Heart right ventricle (tissue), 16 donors: ENCODE measurements at regions of chr7 and their contacts with region 1.

Region 1: GRCh38 chr7:99918959-99919813 is at the start of gene TRIM4:
- DNase-seq: peak; percentile 90 to 91
- ATAC-seq: peak; percentile 99 to 100 (median 99)
- H3K4me3 ChIP-seq: peak within 1 kb of the TSS; percentile 70 to 94 (median 90)
- H3K27ac ChIP-seq: peak within 1 kb of the TSS; percentile 63 to 96 (median 90)
- H3K4me1 ChIP-seq: peaks cover 0 to 38% (median 36%) of the 10 kb centered on the region in 9 donors
- H3K27me3 ChIP-seq: no peaks in the 10 kb centered on the region
- CTCF ChIP-seq: peak in 5 of 9 donors; percentile 17 to 54 (median 49)
- total RNA-seq, gene TRIM4: 5.0 to 9.6 (median 6.6) TPM

Region 2: GRCh38 chr7:99624484-99624883 is 294.7 kb before region 1 on chr7:
- intact Hi-C with region 1: loop called in 2 of 10 experiments (anchors 10 kb)
- DNase-seq: no peak
- ATAC-seq: no peak
- H3K4me3 ChIP-seq: no peak overlapping the region
- H3K27ac ChIP-seq: peak overlapping the region in 1 of 10 donors; percentile 78
- H3K4me1 ChIP-seq: peaks cover 0 to 3% (median 0%) of the 10 kb centered on the region in 9 donors
- H3K27me3 ChIP-seq: no peaks in the 10 kb centered on the region
- CTCF ChIP-seq: no peak

Region 3: GRCh38 chr7:99839287-99840021 is 79.7 kb before region 1 on chr7:
- intact Hi-C with region 1: no loop called
- DNase-seq: no peak
- ATAC-seq: no peak
- H3K4me3 ChIP-seq: no peak overlapping the region
- H3K27ac ChIP-seq: no peak overlapping the region
- H3K4me1 ChIP-seq: peaks cover 0 to under 1% (median 0%) of the 10 kb centered on the region in 9 donors
- H3K27me3 ChIP-seq: no peaks in the 10 kb centered on the region
- CTCF ChIP-seq: no peak

Region 4: DNA sequence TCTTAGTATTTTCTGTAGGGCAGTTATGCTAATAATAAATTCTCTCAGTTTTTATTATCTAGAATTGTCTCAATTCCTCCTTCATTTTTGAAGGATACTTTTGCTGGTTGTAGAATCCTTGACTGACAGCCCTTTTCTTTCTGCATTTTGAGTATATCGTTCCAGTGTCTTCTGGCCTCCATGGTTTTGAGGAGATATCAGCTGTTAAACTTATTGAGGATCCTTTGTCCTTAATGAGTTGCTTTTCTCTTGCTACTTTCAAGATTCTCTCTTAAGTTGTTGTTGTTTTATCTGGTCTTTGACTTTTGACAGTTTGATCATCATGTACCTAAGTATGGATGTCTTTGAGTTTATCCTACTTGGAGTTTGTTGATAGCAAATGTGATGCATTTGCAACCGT is 19.1 kb after region 1 on chr7:
- intact Hi-C with region 1: no loop called
- DNase-seq: no peak
- ATAC-seq: no peak
- H3K4me3 ChIP-seq: no peak overlapping the region
- H3K27ac ChIP-seq: no peak overlapping the region
- H3K4me1 ChIP-seq: no peaks in the 10 kb centered on the region
- H3K27me3 ChIP-seq: peaks cover 0 to 19% (median 7%) of the 10 kb centered on the region in 7 donors
- CTCF ChIP-seq: no peak

Region 5: GRCh38 chr7:99990460-99990852 is 71.3 kb after region 1 on chr7:
- intact Hi-C with region 1: loop called in 8 of 10 experiments (anchors 5 to 10 kb)
- DNase-seq: no peak
- ATAC-seq: no peak
- H3K4me3 ChIP-seq: peak overlapping the region in 6 of 10 donors; percentile 0 to 31 (median 24)
- H3K27ac ChIP-seq: no peak overlapping the region
- H3K4me1 ChIP-seq: peaks cover 0 to 35% (median 20%) of the 10 kb centered on the region in 9 donors
- H3K27me3 ChIP-seq: peaks cover 0 to 7% (median 0%) of the 10 kb centered on the region in 7 donors
- CTCF ChIP-seq: no peak

Region 6: GRCh38 chr7:99997545-99998137 is 78.5 kb after region 1 on chr7:
- intact Hi-C with region 1: loop called in 8 of 10 experiments (anchors 5 to 10 kb)
- DNase-seq: peak; percentile 50 to 71
- ATAC-seq: peak; percentile 67 to 85 (median 82)
- H3K4me3 ChIP-seq: peak overlapping the region; percentile 13 to 68 (median 61)
- H3K27ac ChIP-seq: peak overlapping the region; percentile 54 to 93 (median 85)
- H3K4me1 ChIP-seq: peaks cover 0 to 25% (median 17%) of the 10 kb centered on the region in 9 donors
- H3K27me3 ChIP-seq: no peaks in the 10 kb centered on the region
- CTCF ChIP-seq: peak in 7 of 9 donors; percentile 29 to 60 (median 45)

Region 7: GRCh38 chr7:100008525-100008924 is 89.3 kb after region 1 on chr7:
- intact Hi-C with region 1: no loop called
- DNase-seq: no peak
- ATAC-seq: no peak
- H3K4me3 ChIP-seq: no peak overlapping the region
- H3K27ac ChIP-seq: no peak overlapping the region
- H3K4me1 ChIP-seq: no peaks in the 10 kb centered on the region
- H3K27me3 ChIP-seq: no peaks in the 10 kb centered on the region
- CTCF ChIP-seq: no peak

Region 8: GRCh38 chr7:100081535-100082102 is 162.4 kb after region 1 on chr7 and contains the start of gene ZNF3:
- intact Hi-C with region 1: loop called in 2 of 10 experiments (anchors 10 kb)
- DNase-seq: peak; percentile 98 to 99
- ATAC-seq: peak; percentile 96 to 98 (median 96)
- H3K4me3 ChIP-seq: peak within 1 kb of the TSS; percentile 71 to 99 (median 90)
- H3K27ac ChIP-seq: peak within 1 kb of the TSS; percentile 65 to 96 (median 89)
- H3K4me1 ChIP-seq: peaks cover 7 to 42% (median 35%) of the 10 kb centered on the region in 9 donors
- H3K27me3 ChIP-seq: no peaks in the 10 kb centered on the region
- CTCF ChIP-seq: peak; percentile 85 to 99 (median 95)
- total RNA-seq, gene ZNF3: 14.1 to 17.8 (median 15.3) TPM

Region 9: DNA sequence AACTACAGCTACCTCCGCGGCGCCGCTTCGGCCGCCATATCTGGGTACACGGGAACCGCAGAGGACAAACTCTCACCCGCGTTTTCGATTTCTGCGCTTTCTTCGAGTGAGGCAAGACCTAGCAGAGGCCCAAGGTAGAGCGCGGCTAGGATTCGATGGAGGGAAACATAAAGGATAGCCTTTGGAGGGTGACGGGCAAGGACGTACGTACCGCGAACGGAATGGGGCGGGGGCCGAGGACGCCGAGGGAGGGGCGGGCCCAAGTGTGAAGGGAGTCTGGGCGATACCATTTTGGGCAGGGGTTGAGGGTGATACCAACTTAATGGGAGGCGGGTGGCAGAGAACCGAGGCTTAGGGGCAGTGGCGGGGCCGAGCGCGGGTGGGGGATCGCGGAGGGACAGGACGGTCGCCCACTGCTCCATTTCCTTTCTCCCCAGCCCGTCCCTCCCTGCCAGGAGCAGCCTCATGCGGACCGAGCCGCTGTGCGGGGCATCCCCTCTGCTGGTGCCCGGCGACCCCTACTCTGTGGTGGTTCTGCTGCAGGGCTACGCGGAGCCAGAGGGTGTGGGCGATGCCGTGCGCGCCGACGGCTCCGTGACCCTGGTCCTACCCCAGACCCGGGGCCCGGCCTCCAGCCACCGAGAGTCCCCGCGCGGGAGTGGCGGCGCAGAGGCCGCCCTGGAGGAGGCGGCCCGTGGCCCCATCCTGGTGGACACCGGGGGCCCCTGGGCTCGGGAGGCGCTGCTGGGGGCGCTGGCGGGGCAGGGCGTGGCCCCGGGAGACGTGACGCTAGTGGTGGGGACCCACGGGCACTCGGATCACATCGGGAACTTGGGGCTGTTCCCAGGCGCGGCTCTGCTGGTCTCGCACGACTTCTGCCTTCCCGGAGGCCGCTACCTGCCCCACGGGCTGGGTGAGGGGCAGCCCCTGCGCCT is 208.0 kb after region 1 on chr7 and contains the start of gene MBLAC1:
- intact Hi-C with region 1: loop called in 2 of 10 experiments (anchors 5 to 10 kb)
- DNase-seq: peak; percentile 85 to 93
- ATAC-seq: peak; percentile 92 to 97 (median 96)
- H3K4me3 ChIP-seq: peak within 1 kb of the TSS; percentile 81 to 98 (median 94)
- H3K27ac ChIP-seq: peak within 1 kb of the TSS; percentile 82 to 98 (median 96)
- H3K4me1 ChIP-seq: peaks cover 11 to 43% (median 22%) of the 10 kb centered on the region in 9 donors
- H3K27me3 ChIP-seq: no peaks in the 10 kb centered on the region
- CTCF ChIP-seq: peak in 1 of 9 donors; percentile 3
- total RNA-seq, gene MBLAC1: 1.2 to 3.5 (median 2.0) TPM